OCI-LY7 (cell line): ENCODE measurements at regions of chr6 and their contacts with region 1.

Region 1: GRCh38 chr6:134288538-134289203 is 29.2 kb downstream of the SGK1 start:
- DNase-seq: no peak
- H3K4me3 ChIP-seq: no peak overlapping the region
- H3K27ac ChIP-seq: no peak overlapping the region
- H3K4me1 ChIP-seq: no peaks in the 10 kb centered on the region
- CTCF ChIP-seq: no peak

Region 2: GRCh38 chr6:134267917-134268361 is 20.7 kb before region 1 on chr6:
- CTCF ChIA-PET with region 1: no interaction called
- POLR2A ChIA-PET with region 1: interaction called, 12 read pairs
- intact Hi-C with region 1: no loop called
- DNase-seq: no peak
- H3K4me3 ChIP-seq: no peak overlapping the region
- H3K27ac ChIP-seq: no peak overlapping the region
- H3K4me1 ChIP-seq: no peaks in the 10 kb centered on the region
- CTCF ChIP-seq: no peak

Region 3: GRCh38 chr6:134322216-134322615 is 33.5 kb after region 1 on chr6:
- CTCF ChIA-PET with region 1: no interaction called
- POLR2A ChIA-PET with region 1: no interaction called
- intact Hi-C with region 1: no loop called
- DNase-seq: no peak
- H3K4me3 ChIP-seq: no peak overlapping the region
- H3K27ac ChIP-seq: no peak overlapping the region
- H3K4me1 ChIP-seq: no peaks in the 10 kb centered on the region
- CTCF ChIP-seq: no peak

Region 4: GRCh38 chr6:134413241-134413643 is 124.6 kb after region 1 on chr6:
- CTCF ChIA-PET with region 1: no interaction called
- POLR2A ChIA-PET with region 1: no interaction called
- intact Hi-C with region 1: no loop called
- DNase-seq: no peak
- H3K4me3 ChIP-seq: no peak overlapping the region
- H3K27ac ChIP-seq: no peak overlapping the region
- H3K4me1 ChIP-seq: no peaks in the 10 kb centered on the region
- CTCF ChIP-seq: no peak